A673 (cell line): ENCODE measurements at regions of chr4 and their contacts with region 1.

Region 1: GRCh38 chr4:115113125-115114106 is at the start of gene NDST4:
- DNase-seq: peak; percentile 98
- H3K4me3 ChIP-seq: peak within 1 kb of the TSS; percentile 56
- H3K27ac ChIP-seq: peak within 1 kb of the TSS; percentile 81
- H3K4me1 ChIP-seq: peaks cover 22% of the 10 kb centered on the region
- H3K27me3 ChIP-seq: no peaks in the 10 kb centered on the region
- CTCF ChIP-seq: no peak
- total RNA-seq, gene NDST4: 32.8 and 38.9 TPM in 2 replicates

Region 2: GRCh38 chr4:114677346-114677979 is 436.0 kb before region 1 on chr4:
- CTCF ChIA-PET with region 1: no interaction called
- POLR2A ChIA-PET with region 1: no interaction called
- intact Hi-C with region 1: no loop called
- DNase-seq: no peak
- H3K4me3 ChIP-seq: no peak overlapping the region
- H3K27ac ChIP-seq: no peak overlapping the region
- H3K4me1 ChIP-seq: no peaks in the 10 kb centered on the region
- H3K27me3 ChIP-seq: no peaks in the 10 kb centered on the region
- CTCF ChIP-seq: no peak

Region 3: DNA sequence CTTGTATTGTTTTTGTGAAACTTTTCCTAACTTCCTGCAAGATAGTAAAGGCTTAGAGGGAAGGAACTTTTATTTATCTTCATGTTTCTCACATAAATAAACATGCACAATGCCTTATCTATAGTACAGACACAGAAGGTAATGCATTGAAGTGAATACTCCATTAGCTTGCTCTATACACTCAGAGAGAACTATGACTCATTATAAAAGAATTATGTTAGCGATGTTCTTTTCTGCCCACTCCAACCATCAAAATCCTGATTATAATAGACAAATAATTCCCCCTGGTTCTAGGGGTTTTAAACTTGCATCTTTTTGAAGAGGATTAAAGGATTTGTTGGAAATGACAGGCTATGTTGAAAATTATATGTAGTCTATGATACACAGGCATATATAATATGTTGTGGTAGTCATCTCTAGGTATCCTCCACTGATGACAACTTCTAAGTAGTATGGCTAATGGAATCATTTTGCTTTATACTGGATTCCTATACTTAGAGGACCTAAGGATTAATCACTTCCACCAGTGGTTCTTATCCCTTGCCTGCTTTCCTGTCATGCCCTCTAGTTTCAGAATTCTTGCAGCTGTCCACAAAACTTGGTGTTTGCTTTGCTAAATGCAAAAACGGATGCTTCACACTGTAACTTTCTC is 115.7 kb before region 1 on chr4:
- CTCF ChIA-PET with region 1: no interaction called
- POLR2A ChIA-PET with region 1: no interaction called
- intact Hi-C with region 1: loop called (anchors 2 kb)
- DNase-seq: peak; percentile 58
- H3K4me3 ChIP-seq: no peak overlapping the region
- H3K27ac ChIP-seq: peak overlapping the region; percentile 24
- H3K4me1 ChIP-seq: peaks cover 25% of the 10 kb centered on the region
- H3K27me3 ChIP-seq: no peaks in the 10 kb centered on the region
- CTCF ChIP-seq: no peak

Region 4: DNA sequence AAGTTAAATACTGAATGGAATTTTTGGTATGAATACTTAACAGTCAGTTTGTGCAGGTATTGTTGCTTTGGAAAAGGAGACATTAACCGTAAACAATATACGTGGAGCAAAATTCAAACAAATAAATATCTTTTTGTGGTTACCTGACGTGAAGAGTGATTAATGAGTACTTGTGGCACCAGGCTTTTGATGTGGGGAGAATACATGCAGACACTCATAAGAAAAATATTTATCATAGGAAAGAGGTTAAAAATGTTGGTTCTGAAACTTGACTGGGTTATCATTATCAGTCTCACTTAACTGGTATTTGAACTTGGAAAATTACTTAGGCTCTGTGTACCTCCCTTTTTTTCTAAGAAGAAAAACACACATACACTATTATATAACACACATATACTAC is 136.4 kb after region 1 on chr4:
- CTCF ChIA-PET with region 1: no interaction called
- POLR2A ChIA-PET with region 1: no interaction called
- intact Hi-C with region 1: no loop called
- DNase-seq: no peak
- H3K4me3 ChIP-seq: no peak overlapping the region
- H3K27ac ChIP-seq: no peak overlapping the region
- H3K4me1 ChIP-seq: no peaks in the 10 kb centered on the region
- H3K27me3 ChIP-seq: no peaks in the 10 kb centered on the region
- CTCF ChIP-seq: no peak